Activated CD4-positive, alpha-beta T cell treated with anti-CD3 and anti-CD28 coated beads for 36 hours (primary cell): ENCODE measurements at regions of chr2 and their contacts with region 1.

Region 1: DNA sequence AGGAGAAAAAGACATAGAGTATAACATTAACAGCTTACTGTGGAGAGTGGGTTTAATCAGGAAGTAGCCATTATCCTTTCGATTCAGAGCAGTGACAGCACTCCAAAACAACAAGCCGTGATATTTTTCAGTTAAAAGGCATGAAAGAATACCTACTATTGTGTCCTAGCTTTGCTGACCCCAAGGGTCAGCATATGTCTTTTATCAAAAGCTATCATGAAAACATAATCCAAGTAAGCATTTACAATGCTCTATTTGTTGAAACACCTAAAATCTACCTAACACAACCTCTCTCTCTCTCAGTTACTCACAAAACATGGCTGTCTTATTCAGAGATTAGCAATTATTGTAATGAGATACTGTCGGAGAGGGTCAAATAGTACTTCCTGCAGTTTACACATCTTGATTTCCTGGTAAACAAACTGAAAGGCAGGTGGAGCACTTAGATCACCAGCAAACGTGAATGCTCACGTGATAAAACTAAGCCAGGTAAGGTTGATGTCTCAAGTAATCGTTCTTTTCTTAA is 100.0 kb downstream of the BAZ2B start:
- DNase-seq: peak; percentile 10
- ATAC-seq: peak; percentile 91
- H3K4me3 Mint-ChIP-seq: peak overlapping the region; percentile 73
- H3K27ac Mint-ChIP-seq: peak overlapping the region; percentile 83
- H3K4me1 Mint-ChIP-seq: peaks cover 19% of the 10 kb centered on the region
- H3K27me3 Mint-ChIP-seq: no peaks in the 10 kb centered on the region

Region 2: GRCh38 chr2:157864857-157865430 is 1651.4 kb before region 1 on chr2:
- CTCF ChIA-PET with region 1: no interaction called
- POLR2A ChIA-PET with region 1: no interaction called
- intact Hi-C with region 1: loop called in 1 of 2 experiments (anchors 5 kb)
- DNase-seq: no peak
- ATAC-seq: peak; percentile 83
- H3K4me3 Mint-ChIP-seq: peak overlapping the region; percentile 33
- H3K27ac Mint-ChIP-seq: peak overlapping the region; percentile 83
- H3K4me1 Mint-ChIP-seq: peaks cover 43% of the 10 kb centered on the region
- H3K27me3 Mint-ChIP-seq: no peaks in the 10 kb centered on the region

Region 3: DNA sequence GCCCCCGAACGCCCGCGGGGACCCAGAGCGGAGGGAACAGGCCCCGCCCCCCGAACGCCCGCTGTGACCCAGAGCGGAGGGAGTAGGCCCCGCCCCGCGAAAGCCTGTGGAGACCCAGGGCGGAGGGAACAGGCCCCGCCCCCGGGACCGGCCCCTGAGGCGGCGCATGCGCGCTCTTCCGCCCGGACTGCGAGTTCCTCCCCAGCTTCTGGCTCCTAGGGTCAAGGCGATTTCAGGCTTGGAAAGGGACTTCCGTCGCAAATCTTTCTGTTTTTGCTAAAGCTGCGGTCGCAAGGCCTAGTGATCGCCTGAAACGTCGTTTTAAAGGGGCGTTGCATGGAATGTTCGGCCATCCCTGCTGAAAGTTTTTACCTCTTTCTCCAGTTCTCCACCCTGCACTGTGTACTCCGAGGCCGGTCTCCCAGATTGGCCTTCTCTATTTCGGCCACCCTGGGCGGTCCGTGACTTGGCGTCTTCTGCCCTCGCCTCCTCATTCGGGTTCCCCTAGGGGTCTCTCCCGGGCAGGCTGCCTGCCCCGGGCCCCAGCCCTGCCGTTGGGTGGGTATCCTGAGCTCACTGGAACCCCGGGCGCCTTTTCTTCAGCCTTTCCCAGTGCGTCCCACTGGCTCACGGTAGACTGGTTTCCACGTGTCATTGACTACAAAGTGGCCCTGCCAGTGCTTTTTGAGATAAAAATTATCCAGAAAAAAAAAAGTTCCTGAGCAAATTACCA is 229.4 kb before region 1 on chr2:
- CTCF ChIA-PET with region 1: no interaction called
- POLR2A ChIA-PET with region 1: no interaction called
- intact Hi-C with region 1: loop called in 1 of 2 experiments (anchors 2 kb)
- DNase-seq: peak; percentile 99
- ATAC-seq: peak; percentile 99
- H3K4me3 Mint-ChIP-seq: peak overlapping the region; percentile 84
- H3K27ac Mint-ChIP-seq: peak overlapping the region; percentile 83
- H3K4me1 Mint-ChIP-seq: peaks cover 29% of the 10 kb centered on the region
- H3K27me3 Mint-ChIP-seq: no peaks in the 10 kb centered on the region

Region 4: GRCh38 chr2:159317392-159318088 is 198.8 kb before region 1 on chr2:
- CTCF ChIA-PET with region 1: no interaction called
- POLR2A ChIA-PET with region 1: no interaction called
- intact Hi-C with region 1: no loop called
- DNase-seq: no peak
- ATAC-seq: no peak
- H3K4me3 Mint-ChIP-seq: no peak overlapping the region
- H3K27ac Mint-ChIP-seq: no peak overlapping the region
- H3K4me1 Mint-ChIP-seq: no peaks in the 10 kb centered on the region
- H3K27me3 Mint-ChIP-seq: no peaks in the 10 kb centered on the region

Region 5: GRCh38 chr2:159615140-159615951 is 99.0 kb after region 1 on chr2:
- CTCF ChIA-PET with region 1: no interaction called
- POLR2A ChIA-PET with region 1: no interaction called
- intact Hi-C with region 1: loop called in 1 of 2 experiments (anchors 2 kb)
- DNase-seq: peak; percentile 60
- ATAC-seq: peak; percentile 73
- H3K4me3 Mint-ChIP-seq: peak overlapping the region; percentile 82
- H3K27ac Mint-ChIP-seq: peak overlapping the region; percentile 31
- H3K4me1 Mint-ChIP-seq: peaks cover 12% of the 10 kb centered on the region
- H3K27me3 Mint-ChIP-seq: peaks cover 23% of the 10 kb centered on the region